ENCODE measurements at regions of chr16 and their contacts with region 1.

Region 1: GRCh38 chr16:56866943-56867830 is 2.2 kb downstream of the SLC12A3 start:
- DNase-seq: peak; percentile 40 to 65 (median 55)
- H3K4me3 ChIP-seq: no peak overlapping the region
- H3K4me3 Mint-ChIP-seq: no peak overlapping the region
- H3K27ac ChIP-seq: no peak overlapping the region
- H3K27ac Mint-ChIP-seq: no peak overlapping the region
- H3K4me1 ChIP-seq: peaks cover 30 to 44% of the 10 kb centered on the region in 2 donors
- H3K4me1 Mint-ChIP-seq: peaks cover 41% of the 10 kb centered on the region
- H3K27me3 ChIP-seq: no peaks in the 10 kb centered on the region
- H3K27me3 Mint-ChIP-seq: peaks cover 0 to 9% (median 2%) of the 10 kb centered on the region in 3 donors
- CTCF ChIP-seq: peak; percentile 84

Region 2: DNA sequence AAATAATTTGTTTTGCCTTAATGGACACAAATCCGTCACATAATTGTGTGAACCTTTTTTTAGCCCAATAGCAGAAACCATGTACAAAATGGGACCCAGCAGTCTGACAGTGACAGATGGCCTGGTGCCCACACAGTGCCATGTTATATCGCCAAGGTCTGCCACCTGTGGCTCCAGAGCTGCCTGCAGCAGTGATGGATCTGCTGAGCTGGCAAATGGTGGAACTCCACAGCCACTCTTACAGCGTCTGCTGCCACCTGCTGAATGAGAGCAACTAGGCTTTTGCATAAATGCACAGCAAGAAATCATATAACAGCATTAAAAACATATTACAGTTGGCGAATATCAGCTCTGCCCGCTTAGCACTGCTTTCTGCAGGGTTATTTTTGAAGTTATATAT is 77.8 kb before region 1 on chr16:
- intact Hi-C with region 1: no loop called
- DNase-seq: no peak
- H3K4me3 ChIP-seq: no peak overlapping the region
- H3K4me3 Mint-ChIP-seq: no peak overlapping the region
- H3K27ac ChIP-seq: no peak overlapping the region
- H3K27ac Mint-ChIP-seq: no peak overlapping the region
- H3K4me1 ChIP-seq: no peaks in the 10 kb centered on the region
- H3K4me1 Mint-ChIP-seq: peaks cover 17% of the 10 kb centered on the region
- H3K27me3 ChIP-seq: no peaks in the 10 kb centered on the region
- H3K27me3 Mint-ChIP-seq: no peaks in the 10 kb centered on the region
- CTCF ChIP-seq: no peak

Region 3: DNA sequence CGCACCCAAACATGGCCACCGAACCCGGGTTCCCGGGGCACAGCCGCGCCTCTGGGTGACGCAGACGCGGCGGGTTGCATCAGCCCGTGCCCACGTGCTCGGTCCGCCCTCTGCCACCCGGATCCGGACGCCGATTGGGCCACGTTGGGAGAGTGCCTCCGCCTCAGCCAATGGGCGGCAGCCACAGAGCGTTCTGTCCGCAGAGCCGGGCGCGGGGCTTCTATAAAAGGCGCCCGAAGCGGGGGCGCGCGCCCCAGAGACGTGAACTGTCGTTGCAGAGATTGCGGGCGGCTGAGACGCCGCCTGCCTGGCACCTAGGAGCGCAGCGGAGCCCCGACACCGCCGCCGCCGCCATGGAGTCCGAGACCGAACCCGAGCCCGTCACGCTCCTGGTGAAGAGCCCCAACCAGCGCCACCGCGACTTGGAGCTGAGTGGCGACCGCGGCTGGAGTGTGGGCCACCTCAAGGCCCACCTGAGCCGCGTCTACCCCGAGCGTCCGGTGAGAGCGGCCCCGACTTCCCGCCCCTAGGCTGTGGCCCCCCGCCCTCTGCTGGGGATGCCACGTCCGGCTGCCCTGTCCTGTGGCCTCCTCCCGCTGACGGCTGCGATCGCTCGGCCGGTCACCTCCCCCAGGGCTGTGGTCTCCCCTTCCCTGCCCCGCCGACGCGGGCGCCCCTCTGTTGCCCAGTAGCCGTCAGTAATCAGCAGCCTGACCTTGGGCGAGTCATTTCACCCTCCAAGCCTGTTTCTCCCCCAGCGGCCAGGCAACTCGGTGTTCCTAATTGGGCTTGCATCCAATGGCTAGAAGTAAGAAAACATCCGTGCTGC is 64.9 kb after region 1 on chr16 and contains the start of gene HERPUD1:
- intact Hi-C with region 1: loop called (anchors 5 to 10 kb)
- DNase-seq: peak; percentile 98 to 100 (median 99)
- H3K4me3 ChIP-seq: peak within 1 kb of the TSS; percentile 94 to 97 (median 96)
- H3K4me3 Mint-ChIP-seq: peak within 1 kb of the TSS; percentile 97 to 98
- H3K27ac ChIP-seq: peak within 1 kb of the TSS; percentile 97 to 99
- H3K27ac Mint-ChIP-seq: peak within 1 kb of the TSS; percentile 98 to 99 (median 98)
- H3K4me1 ChIP-seq: peaks cover 30 to 41% of the 10 kb centered on the region in 2 donors
- H3K4me1 Mint-ChIP-seq: peaks cover 35% of the 10 kb centered on the region
- H3K27me3 ChIP-seq: no peaks in the 10 kb centered on the region
- H3K27me3 Mint-ChIP-seq: peaks cover 0 to 7% (median 2%) of the 10 kb centered on the region in 3 donors
- CTCF ChIP-seq: no peak
- polyA plus RNA-seq, gene HERPUD1: 179 to 454 (median 186) TPM

Region 4: DNA sequence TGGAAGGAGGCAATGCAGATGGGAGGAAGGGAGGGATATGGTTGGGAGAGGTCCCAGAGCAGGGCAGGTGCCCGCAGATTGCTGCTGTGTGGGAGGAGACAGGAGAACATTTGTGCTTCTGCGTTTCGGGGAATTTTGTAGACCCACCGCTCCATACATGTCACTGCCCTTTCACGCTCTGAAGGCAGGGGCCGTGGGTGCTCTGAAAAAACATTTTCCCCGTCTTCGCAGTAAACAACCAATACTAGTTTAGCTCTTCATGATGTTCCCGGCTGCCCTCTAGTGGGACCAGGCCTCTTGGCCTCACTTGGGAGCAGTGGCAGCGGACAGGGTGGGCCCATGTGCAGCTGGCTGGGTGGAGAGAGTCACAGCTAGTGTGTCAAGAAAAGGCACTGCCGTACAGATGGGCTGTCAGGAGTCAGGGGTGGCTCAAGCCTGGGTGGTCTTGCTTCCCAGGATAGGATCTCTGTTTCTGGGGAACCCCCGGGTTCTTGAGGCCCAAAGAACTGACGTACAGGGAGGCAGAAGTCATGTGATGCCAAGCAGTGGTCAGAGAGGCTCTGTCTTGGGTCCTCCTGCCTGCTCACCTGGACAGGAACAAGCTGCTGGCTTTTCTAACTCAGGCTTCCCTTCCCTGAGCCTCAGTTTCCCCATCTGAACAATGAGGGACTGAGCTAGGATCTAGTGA is 178.7 kb after region 1 on chr16:
- intact Hi-C with region 1: loop called in 1 of 2 experiments (anchors 10 kb)
- DNase-seq: peak in 2 of 3 donors; percentile 32 to 39
- H3K4me3 ChIP-seq: peak overlapping the region in 1 of 3 experiments; percentile 16
- H3K4me3 Mint-ChIP-seq: no peak overlapping the region
- H3K27ac ChIP-seq: peak overlapping the region; percentile 15 to 68
- H3K27ac Mint-ChIP-seq: peak overlapping the region; percentile 53 to 89 (median 81)
- H3K4me1 ChIP-seq: peaks cover 48 to 50% of the 10 kb centered on the region in 2 donors
- H3K4me1 Mint-ChIP-seq: peaks cover 50% of the 10 kb centered on the region
- H3K27me3 ChIP-seq: no peaks in the 10 kb centered on the region
- H3K27me3 Mint-ChIP-seq: peaks cover 0 to 6% (median 2%) of the 10 kb centered on the region in 3 donors
- CTCF ChIP-seq: peak; percentile 38

Measured in CD14-positive monocyte (primary cell).